Caco-2 (cell line): ENCODE measurements at regions of chr17 and their contacts with region 1.

Region 1: DNA sequence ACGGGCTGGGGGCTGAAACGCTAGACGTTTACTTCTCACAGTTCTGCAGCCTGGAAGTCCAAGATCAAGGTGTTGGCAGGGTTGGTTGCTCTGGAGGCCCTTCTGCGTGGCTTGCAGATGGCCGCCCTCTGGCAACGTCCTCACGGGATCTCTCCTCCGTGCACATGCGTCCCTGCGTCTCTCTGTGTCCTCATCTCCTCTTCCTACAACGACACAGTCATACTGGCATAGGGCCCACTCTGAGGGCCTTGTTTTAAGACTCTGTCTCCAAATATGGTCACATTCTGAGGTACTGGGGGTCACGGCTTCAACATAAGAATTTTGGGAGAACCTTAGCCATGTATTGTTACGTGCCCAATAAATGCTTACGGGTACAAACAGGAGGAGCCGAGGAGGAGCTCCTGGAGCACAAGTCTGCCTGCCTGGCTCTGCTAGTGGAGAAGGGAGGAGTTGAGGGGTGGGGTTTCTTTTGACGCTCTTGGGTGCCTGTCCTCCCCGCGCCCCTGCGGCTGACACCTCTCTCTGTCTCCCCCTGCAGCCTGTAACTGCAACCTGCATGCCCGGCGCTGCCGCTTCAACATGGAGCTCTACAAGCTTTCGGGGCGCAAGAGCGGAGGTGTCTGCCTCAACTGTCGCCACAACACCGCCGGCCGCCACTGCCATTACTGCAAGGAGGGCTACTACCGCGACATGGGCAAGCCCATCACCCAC is 141.1 kb downstream of the NTN1 start:
- DNase-seq: peak; percentile 41 to 49
- H3K4me3 ChIP-seq: peak overlapping the region; percentile 36
- H3K4me3 Mint-ChIP-seq: peak overlapping the region; percentile 71
- H3K27ac Mint-ChIP-seq: peak overlapping the region; percentile 76
- H3K4me1 ChIP-seq: no peaks in the 10 kb centered on the region
- H3K4me1 Mint-ChIP-seq: peaks cover 9% of the 10 kb centered on the region
- H3K27me3 ChIP-seq: no peaks in the 10 kb centered on the region
- H3K27me3 Mint-ChIP-seq: no peaks in the 10 kb centered on the region
- CTCF ChIP-seq: peak; percentile 23 to 47

Region 2: GRCh38 chr17:8997994-8998628 is 164.3 kb before region 1 on chr17:
- CTCF ChIA-PET with region 1: no interaction called
- POLR2A ChIA-PET with region 1: no interaction called
- intact Hi-C with region 1: loop called (anchors 5 kb)
- DNase-seq: peak; percentile 50 to 62
- H3K4me3 ChIP-seq: no peak overlapping the region
- H3K4me3 Mint-ChIP-seq: no peak overlapping the region
- H3K27ac Mint-ChIP-seq: no peak overlapping the region
- H3K4me1 ChIP-seq: 0 out of 2 replicates have a peak, but pooled peaks cover 5% of the 10 kb centered on the region
- H3K4me1 Mint-ChIP-seq: peaks cover 10% of the 10 kb centered on the region
- H3K27me3 ChIP-seq: no peaks in the 10 kb centered on the region
- H3K27me3 Mint-ChIP-seq: no peaks in the 10 kb centered on the region
- CTCF ChIP-seq: peak; percentile 64 to 76